GM10248 (cell line): ENCODE measurements at regions of chr14 and their contacts with region 1.

Region 1: DNA sequence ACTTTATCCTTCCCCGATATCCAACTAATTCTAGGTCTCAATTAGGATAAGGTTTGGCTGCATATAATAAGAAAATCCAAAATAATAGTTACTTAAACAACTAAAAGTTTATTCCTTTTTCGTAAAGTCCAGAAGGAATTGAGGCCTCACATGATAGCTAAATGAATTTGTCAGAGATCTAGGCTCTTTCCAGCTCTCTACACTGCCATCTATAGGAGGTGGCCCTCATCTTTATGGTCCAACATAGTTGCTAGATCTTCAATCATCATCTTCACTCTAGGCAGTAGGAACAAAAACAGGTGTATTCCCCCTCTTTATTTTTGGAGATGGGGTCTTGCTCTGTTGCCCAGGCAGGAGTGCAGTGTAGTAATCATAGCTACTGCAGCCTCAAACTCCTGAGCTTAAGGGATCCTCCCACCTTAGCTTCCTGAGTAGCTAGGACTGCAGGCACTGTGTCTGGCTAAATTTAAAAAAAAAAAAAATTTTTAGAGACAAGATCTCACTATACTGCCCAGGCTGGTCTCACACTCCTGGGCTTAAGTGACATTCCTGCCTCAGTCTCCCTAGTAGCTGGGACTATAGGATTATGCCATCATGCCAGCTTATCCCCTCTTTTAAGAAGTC is 46.5 kb upstream of the SAV1 start:
- DNase-seq: peak; percentile 59
- CTCF ChIP-seq: peak; percentile 59

Region 2: GRCh38 chr14:50619556-50620141 is 94.9 kb before region 1 on chr14:
- CTCF ChIA-PET with region 1: interaction called, 40 read pairs
- POLR2A ChIA-PET with region 1: no interaction called
- DNase-seq: peak; percentile 39
- CTCF ChIP-seq: peak; percentile 57

Region 3: DNA sequence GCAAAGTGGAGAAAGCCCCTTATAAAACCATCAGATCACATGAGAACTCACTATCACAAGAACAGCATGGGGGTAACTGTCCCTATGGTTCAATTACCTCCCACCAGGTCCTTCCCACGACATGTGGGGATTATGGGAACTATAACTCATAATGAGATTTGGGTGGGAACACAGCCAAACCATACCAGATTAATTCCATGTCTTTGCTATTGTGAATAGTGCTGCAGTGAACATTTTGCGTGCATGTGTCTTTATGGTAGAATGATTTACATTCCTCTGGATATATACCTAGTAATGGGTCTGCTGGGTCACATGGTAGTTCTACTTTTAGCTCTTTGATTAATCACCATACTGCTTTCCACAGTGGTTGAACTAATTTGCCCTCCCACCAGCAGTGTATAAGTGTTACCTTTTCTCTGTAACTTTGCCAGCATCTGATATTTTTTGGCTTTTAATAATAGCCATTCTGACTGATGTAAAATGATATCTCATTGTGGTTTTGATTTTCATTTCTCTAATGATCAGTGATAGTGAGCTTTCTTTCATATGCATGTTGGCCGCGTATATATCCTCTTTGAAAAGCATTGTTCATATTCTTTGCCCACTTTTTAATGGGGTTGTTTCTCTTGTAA is 16.8 kb before region 1 on chr14:
- CTCF ChIA-PET with region 1: interaction called, 18 read pairs
- POLR2A ChIA-PET with region 1: no interaction called
- DNase-seq: no peak
- CTCF ChIP-seq: no peak

Region 4: GRCh38 chr14:50726372-50727107 is 12.0 kb after region 1 on chr14:
- CTCF ChIA-PET with region 1: interaction called, 41 read pairs
- POLR2A ChIA-PET with region 1: no interaction called
- DNase-seq: peak; percentile 20
- CTCF ChIP-seq: no peak